ENCODE measurements at regions of chr1 and their contacts with region 1.

Region 1: GRCh38 chr1:43073490-43074230 is 98.4 kb downstream of the EBNA1BP2 start:
- DNase-seq: peak; percentile 81
- H3K4me3 ChIP-seq: no peak overlapping the region; a peak in 1 of 4 replicates
- H3K27ac ChIP-seq: no peak overlapping the region
- H3K4me1 ChIP-seq: peaks cover 0 to 10% of the 10 kb centered on the region in 2 experiments; a peak in 1 of 4 replicates
- H3K27me3 ChIP-seq: no peaks in the 10 kb centered on the region
- CTCF ChIP-seq: peak; percentile 82
- EP300 ChIP-seq: no peak
- RAD21 ChIP-seq: peak; percentile 99

Region 2: DNA sequence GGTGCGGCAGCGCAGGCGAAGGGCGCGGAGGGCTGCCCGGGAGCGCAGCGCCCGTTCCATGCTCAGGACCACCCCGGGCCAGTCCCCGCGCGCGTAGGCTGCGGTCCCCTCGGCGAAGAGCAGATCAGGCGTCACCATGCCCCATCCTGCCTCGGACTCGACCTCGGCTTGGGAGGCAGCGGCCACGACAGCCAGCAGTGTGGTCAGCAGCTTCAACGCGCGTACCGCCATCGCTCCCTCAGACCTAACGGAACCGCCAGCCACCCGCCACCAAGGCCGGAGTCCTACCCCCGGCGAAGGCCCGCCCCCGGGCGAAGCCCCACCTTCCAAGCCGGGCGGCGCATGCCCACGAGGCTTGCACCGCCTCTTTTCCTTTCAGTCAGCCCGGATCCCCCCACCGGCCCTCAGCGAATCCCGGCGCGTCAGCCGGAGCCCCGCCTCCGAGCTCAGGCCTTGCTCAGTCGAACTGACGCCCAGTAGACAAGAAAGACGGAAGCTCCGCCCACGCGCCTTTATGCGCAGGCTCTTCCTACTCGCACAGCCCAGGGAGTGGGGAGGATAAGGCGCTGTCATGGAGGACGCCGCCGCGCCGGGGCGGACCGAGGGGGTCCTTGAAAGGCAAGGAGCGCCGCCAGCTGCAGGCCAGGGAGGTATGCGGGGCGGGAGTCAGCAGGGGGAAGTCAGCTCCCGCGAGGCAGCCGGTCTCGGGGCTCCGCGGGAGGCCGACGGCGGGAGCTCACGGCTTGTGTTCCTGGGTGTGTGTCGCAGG is 306.7 kb before region 1 on chr1 and contains the starts of genes C1orf50 and P3H1:
- CTCF ChIA-PET with region 1: interaction called, 75 read pairs
- POLR2A ChIA-PET with region 1: interaction called, 4 read pairs
- DNase-seq: peak; percentile 97
- H3K4me3 ChIP-seq: peak within 1 kb of the TSS; percentile 77 to 91
- H3K27ac ChIP-seq: peak within 1 kb of the TSS; percentile 75 to 84
- H3K4me1 ChIP-seq: peaks cover 4 to 12% of the 10 kb centered on the region in 2 experiments; a peak in 2 of 4 replicates
- H3K27me3 ChIP-seq: no peaks in the 10 kb centered on the region
- CTCF ChIP-seq: no peak
- EP300 ChIP-seq: no peak
- RAD21 ChIP-seq: no peak
- polyA plus RNA-seq, gene C1orf50: 2.6 and 3.6 TPM in 2 replicates
- polyA plus RNA-seq, gene P3H1: 64.3 and 66.8 TPM in 2 replicates

Region 3: DNA sequence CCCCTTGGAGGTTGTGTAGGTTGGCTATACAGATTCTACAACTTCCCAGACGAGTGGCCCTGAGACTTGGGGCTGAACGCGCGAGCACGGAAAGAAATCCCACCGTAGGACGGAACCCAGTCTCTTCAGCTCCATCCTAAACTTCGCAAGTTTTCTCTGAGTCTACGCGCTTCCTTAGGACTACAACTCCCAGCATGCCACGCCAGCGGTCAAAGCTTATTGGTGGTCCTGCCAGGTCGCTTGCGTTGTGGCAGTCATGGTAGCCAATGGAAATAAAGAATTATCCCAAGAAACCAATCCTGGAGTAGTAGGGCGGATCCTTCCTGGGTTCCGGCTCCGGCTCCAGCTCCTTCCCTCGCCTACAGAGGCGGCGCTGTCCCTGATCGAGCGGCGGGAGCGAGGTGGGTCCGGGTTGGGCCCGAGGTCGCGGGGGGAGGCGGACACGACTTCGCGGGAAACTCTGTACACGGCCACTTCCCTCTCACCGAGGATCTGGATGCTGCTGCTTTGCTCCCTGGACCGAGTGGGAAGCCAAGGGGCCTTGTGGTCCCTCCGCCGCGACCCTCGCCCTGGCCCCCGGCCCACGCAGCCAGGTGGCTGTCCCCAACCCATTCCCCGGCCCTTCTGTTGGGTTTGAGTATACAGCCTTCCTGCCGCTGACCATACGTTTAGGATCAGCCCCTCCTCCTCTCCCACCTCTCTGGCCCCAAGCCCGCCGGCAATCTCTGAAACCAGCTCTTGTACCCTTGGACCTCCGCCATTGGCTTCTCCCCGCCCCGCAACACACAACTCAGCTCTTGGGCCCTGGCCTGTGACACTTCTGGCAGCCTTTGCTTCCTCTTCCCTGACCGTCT is 227.2 kb before region 1 on chr1 and contains the start of gene ZNF691:
- CTCF ChIA-PET with region 1: interaction called, 16 read pairs
- POLR2A ChIA-PET with region 1: no interaction called
- DNase-seq: peak; percentile 95
- H3K4me3 ChIP-seq: peak within 1 kb of the TSS; percentile 64 to 73
- H3K27ac ChIP-seq: peak within 1 kb of the TSS in 1 of 2 experiments; percentile 62; a peak in 2 of 4 replicates
- H3K4me1 ChIP-seq: peaks cover 0 to 11% of the 10 kb centered on the region in 2 experiments; a peak in 2 of 4 replicates
- H3K27me3 ChIP-seq: no peaks in the 10 kb centered on the region
- CTCF ChIP-seq: peak; percentile 48
- EP300 ChIP-seq: no peak
- RAD21 ChIP-seq: no peak
- polyA plus RNA-seq, gene ZNF691: 7.2 and 10.1 TPM in 2 replicates

Region 4: GRCh38 chr1:42931108-42931539 is 142.5 kb before region 1 on chr1:
- CTCF ChIA-PET with region 1: interaction called, 607 read pairs
- POLR2A ChIA-PET with region 1: interaction called, 3 read pairs
- DNase-seq: peak; percentile 88
- H3K4me3 ChIP-seq: no peak overlapping the region; a peak in 1 of 4 replicates
- H3K27ac ChIP-seq: no peak overlapping the region
- H3K4me1 ChIP-seq: peaks cover 3% of the 10 kb centered on the region in 2 experiments; a peak in 3 of 4 replicates
- H3K27me3 ChIP-seq: no peaks in the 10 kb centered on the region
- CTCF ChIP-seq: peak; percentile 62
- EP300 ChIP-seq: no peak
- RAD21 ChIP-seq: peak; percentile 76

Region 5: GRCh38 chr1:42962641-42963377 is 110.9 kb before region 1 on chr1:
- CTCF ChIA-PET with region 1: interaction called, 14 read pairs
- POLR2A ChIA-PET with region 1: no interaction called
- DNase-seq: no peak
- H3K4me3 ChIP-seq: no peak overlapping the region
- H3K27ac ChIP-seq: peak overlapping the region in 1 of 2 experiments; percentile 12; a peak in 1 of 4 replicates
- H3K4me1 ChIP-seq: peaks cover 16 to 21% of the 10 kb centered on the region in 2 experiments
- H3K27me3 ChIP-seq: no peaks in the 10 kb centered on the region
- CTCF ChIP-seq: no peak
- EP300 ChIP-seq: no peak
- RAD21 ChIP-seq: no peak

Region 6: DNA sequence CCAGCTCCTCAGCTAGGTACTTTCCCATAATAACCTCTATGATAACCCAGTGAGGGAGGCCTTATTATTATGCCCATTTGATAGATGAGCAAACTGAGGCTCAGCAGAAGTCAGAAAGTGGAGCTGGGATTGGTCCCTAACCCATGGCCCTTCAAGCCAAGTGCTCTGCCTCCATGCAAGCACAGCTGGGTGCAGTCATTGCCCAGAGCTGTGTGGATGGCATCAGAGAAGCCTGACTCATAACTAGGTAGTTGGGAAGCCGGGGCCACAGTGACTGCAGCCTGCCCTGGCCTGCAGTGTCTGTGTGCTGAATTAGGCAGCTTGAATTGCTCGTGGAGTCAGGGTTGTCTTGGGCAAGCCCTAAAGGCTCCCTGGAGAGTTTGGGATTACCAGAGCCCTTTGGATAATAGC is 25.1 kb before region 1 on chr1:
- CTCF ChIA-PET with region 1: interaction called, 16 read pairs
- POLR2A ChIA-PET with region 1: no interaction called
- DNase-seq: no peak
- H3K4me3 ChIP-seq: no peak overlapping the region
- H3K27ac ChIP-seq: no peak overlapping the region
- H3K4me1 ChIP-seq: peaks cover 0 to 14% of the 10 kb centered on the region in 2 experiments; a peak in 1 of 4 replicates
- H3K27me3 ChIP-seq: no peaks in the 10 kb centered on the region
- CTCF ChIP-seq: no peak
- EP300 ChIP-seq: no peak
- RAD21 ChIP-seq: no peak

Measured in SK-N-SH (cell line).